ENCODE measurements at regions of chr9 and their contacts with region 1.

Region 1: GRCh38 chr9:115593587-115594091 is 475.7 kb upstream of the TNC start:
- H3K4me3 Mint-ChIP-seq: no peak overlapping the region
- H3K27ac Mint-ChIP-seq: no peak overlapping the region
- H3K4me1 Mint-ChIP-seq: no peaks in the 10 kb centered on the region
- H3K27me3 Mint-ChIP-seq: peaks cover 11% of the 10 kb centered on the region

Region 2: DNA sequence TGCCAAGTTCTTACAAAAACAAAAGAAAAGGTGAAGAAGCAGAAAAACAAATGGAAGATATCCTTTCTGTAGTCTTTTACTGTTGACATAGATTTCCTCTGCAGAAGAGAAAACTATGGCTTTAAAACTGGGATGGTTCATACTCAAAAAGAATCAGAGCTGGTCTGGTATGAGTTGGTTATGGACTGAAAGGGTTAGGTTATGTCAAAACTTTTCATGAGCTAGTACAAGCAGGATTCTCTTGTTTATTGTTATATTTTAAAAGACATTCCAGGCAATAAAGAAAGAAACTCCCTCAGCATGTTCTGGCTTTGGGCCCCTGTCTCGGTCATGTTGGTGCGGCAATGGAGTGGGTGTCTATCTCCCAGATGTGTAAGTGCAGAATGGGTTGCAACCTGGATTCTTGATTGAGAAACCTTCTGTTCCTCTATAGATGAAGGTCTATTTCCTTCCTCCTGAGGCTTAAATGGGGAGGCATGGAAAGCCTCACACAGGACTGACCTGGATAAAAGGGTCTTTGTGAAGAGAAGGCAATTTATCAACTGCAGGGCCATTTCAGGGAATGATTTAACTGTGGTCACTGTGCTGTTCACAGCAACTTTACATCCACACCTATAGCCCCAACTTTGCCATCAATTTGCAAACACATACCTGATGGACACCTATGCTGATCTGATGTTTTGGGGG is 266.1 kb before region 1 on chr9:
- intact Hi-C with region 1: no loop called
- H3K4me3 Mint-ChIP-seq: no peak overlapping the region
- H3K27ac Mint-ChIP-seq: no peak overlapping the region
- H3K4me1 Mint-ChIP-seq: no peaks in the 10 kb centered on the region
- H3K27me3 Mint-ChIP-seq: no peaks in the 10 kb centered on the region

Region 3: GRCh38 chr9:116661037-116661954 is 1067.7 kb after region 1 on chr9:
- intact Hi-C with region 1: loop called (anchors 2 kb)
- H3K4me3 Mint-ChIP-seq: no peak overlapping the region
- H3K27ac Mint-ChIP-seq: no peak overlapping the region
- H3K4me1 Mint-ChIP-seq: no peaks in the 10 kb centered on the region
- H3K27me3 Mint-ChIP-seq: no peaks in the 10 kb centered on the region

Region 4: GRCh38 chr9:116928884-116929283 is 1335.2 kb after region 1 on chr9:
- intact Hi-C with region 1: no loop called
- H3K4me3 Mint-ChIP-seq: no peak overlapping the region
- H3K27ac Mint-ChIP-seq: no peak overlapping the region
- H3K4me1 Mint-ChIP-seq: peaks cover 26% of the 10 kb centered on the region
- H3K27me3 Mint-ChIP-seq: peaks cover 1% of the 10 kb centered on the region